ENCODE measurements at regions of chr2 and their contacts with region 1.

Region 1: DNA sequence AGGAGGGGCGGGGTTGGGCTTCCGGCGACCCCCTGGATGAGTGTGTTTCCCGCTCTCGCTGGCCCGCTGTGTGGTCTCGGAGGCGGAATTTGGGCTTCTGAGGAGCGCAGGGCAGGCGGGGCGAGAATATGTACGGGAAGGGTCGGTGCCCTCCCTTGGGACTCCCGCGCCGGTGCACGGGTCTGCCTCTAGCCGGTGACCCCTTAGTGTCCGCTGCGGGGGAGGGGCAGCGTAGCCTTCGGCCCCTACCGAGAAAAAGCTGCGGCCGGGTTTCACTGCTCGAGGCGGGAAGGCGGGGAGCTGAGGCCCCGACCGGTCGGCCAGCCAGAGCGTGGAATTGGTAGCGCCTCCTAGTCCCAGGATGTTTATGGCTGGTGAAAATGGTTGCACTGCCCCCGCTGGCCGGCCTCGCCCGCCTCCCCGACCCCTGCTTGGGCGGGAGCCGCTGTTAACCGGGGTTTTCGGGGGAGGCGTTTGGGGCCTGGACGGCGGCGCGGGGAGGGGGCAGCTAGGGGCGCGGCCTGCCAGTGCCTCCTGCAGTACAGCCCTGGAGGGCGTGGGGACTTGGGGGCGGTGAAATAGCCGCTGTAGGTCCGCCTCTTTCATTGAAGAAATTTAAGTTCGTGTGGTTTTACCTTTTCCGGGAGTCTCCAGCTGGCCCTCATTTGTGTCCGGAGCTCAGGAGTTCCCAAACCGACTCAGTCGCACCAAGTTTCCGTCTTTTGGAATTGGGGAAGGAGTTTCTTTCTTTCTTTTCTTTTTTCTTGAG is at the start of gene UGP2:
- DNase-seq: peak; percentile 91
- ATAC-seq: peak; percentile 72
- H3K4me3 Mint-ChIP-seq: peak within 1 kb of the TSS; percentile 92
- H3K27ac Mint-ChIP-seq: peak within 1 kb of the TSS; percentile 98
- H3K4me1 Mint-ChIP-seq: peaks cover 39% of the 10 kb centered on the region
- H3K27me3 Mint-ChIP-seq: no peaks in the 10 kb centered on the region
- total RNA-seq, gene UGP2: 98.4 to 144 TPM

Region 2: DNA sequence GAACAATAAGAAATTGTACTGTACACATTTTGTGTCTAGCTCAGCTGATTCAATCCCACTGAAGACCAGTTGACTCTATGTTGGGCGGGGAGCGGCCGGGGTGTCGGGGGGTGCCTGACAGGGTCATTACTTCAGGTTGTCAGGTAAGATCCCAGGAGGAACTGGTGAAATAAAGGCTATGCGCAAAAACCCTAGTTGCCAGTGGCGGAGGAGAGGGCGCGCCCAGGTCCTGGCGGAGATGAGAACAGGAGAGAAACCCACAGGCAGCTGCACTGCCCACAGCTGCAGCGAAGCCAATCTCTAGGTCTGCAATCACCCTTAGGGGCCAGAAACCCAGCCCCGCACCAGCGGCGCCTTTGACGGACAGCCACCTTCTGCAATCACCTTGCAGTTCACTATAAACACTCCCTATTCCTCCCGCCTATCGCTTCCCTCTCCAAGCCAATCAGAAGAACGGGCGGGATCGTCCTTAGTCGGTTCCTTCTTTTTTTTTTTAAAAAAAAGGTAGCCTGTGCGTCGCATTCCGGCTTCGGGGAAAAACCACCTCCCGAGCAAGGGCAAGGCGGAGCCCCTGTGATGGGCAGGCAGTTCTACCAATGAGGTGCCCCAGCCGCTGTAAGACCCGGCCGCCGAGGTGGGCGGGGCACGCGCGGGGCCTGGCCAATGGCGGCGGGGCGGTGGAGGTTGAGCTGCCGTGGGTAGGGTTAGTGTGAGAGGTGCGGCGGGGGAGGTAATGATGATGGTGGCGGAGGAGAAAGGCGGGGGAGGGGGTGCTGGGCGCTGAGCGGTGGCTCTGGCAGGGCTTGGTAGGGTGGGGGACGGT is 1136.2 kb before region 1 on chr2 and contains the start of gene EHBP1:
- CTCF ChIA-PET with region 1: no interaction called
- POLR2A ChIA-PET with region 1: interaction called, 4 read pairs
- intact Hi-C with region 1: loop called in 1 of 2 experiments (anchors 1 kb)
- DNase-seq: peak; percentile 99
- ATAC-seq: peak; percentile 95
- H3K4me3 Mint-ChIP-seq: peak within 1 kb of the TSS; percentile 79
- H3K27ac Mint-ChIP-seq: peak within 1 kb of the TSS; percentile 83
- H3K4me1 Mint-ChIP-seq: peaks cover 31% of the 10 kb centered on the region
- H3K27me3 Mint-ChIP-seq: no peaks in the 10 kb centered on the region
- total RNA-seq, gene EHBP1: 27.3 to 28.5 TPM

Region 3: GRCh38 chr2:63856303-63856603 is 14.8 kb after region 1 on chr2:
- CTCF ChIA-PET with region 1: interaction called, 33 read pairs
- POLR2A ChIA-PET with region 1: interaction called, 14 read pairs
- intact Hi-C with region 1: loop called (anchors 1 kb)
- DNase-seq: peak; percentile 63
- ATAC-seq: peak; percentile 89
- H3K4me3 Mint-ChIP-seq: peak overlapping the region; percentile 40
- H3K27ac Mint-ChIP-seq: peak overlapping the region; percentile 83
- H3K4me1 Mint-ChIP-seq: peaks cover 51% of the 10 kb centered on the region
- H3K27me3 Mint-ChIP-seq: no peaks in the 10 kb centered on the region

Region 4: GRCh38 chr2:64018923-64019718 is 177.7 kb after region 1 on chr2 and contains the start of gene VPS54:
- CTCF ChIA-PET with region 1: no interaction called
- POLR2A ChIA-PET with region 1: no interaction called
- intact Hi-C with region 1: loop called in 1 of 2 experiments (anchors 1 kb)
- DNase-seq: peak; percentile 74
- ATAC-seq: peak; percentile 80
- H3K4me3 Mint-ChIP-seq: peak within 1 kb of the TSS; percentile 99
- H3K27ac Mint-ChIP-seq: peak within 1 kb of the TSS; percentile 98
- H3K4me1 Mint-ChIP-seq: peaks cover 37% of the 10 kb centered on the region
- H3K27me3 Mint-ChIP-seq: no peaks in the 10 kb centered on the region
- total RNA-seq, gene VPS54: 9.0 to 11.7 TPM

Region 5: DNA sequence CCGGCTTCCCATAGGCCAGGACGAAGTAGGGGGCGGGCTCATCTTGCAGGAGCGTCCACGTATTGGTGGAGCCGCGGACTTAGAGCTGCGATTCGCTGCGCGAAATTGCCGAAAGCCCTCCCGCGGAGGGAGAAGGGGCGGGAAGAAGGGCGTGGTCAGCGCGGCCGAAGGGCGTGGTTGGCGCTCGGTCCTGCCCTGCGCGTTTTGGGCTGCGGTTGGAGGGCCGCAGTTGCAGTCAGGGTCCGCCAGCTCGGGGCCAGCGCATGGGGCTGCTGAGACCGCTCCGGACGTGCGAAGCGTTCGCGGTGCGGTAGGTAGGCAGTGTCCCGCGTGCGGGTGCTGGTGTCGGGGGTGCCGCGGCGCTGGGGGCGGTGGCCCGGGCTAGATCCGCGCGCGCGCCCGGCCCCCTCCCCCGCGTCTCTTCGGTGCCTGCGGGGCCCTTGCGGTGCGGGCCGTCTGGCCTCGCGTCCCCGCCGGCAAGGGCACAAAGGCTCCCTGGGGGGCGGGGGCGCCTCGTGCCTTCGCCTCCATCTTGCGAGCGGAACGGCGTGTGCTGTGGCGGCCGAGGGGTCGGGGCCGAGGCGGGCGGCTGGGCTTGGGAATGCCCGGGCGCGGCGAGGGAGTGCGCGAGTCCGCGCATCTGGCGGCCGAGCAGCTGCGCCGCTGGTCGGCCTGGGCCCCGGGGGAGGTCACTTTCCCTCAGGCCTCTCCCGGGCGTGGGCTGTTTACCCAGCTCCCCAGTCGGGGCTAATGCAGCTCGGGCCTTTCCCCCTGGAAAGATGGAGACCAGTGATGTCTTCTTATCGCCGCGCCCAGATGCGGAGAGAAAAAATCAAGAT is 1215.0 kb after region 1 on chr2 and contains the start of gene CEP68:
- CTCF ChIA-PET with region 1: interaction called, 3 read pairs
- POLR2A ChIA-PET with region 1: no interaction called
- intact Hi-C with region 1: loop called in 1 of 2 experiments (anchors 2 kb)
- DNase-seq: peak; percentile 98
- ATAC-seq: peak; percentile 94
- H3K4me3 Mint-ChIP-seq: peak within 1 kb of the TSS; percentile 93
- H3K27ac Mint-ChIP-seq: peak within 1 kb of the TSS; percentile 84
- H3K4me1 Mint-ChIP-seq: peaks cover 55% of the 10 kb centered on the region
- H3K27me3 Mint-ChIP-seq: no peaks in the 10 kb centered on the region
- total RNA-seq, gene CEP68: 4.9 to 6.0 TPM

Region 6: GRCh38 chr2:65227425-65228262 is 1386.2 kb after region 1 on chr2 and contains the start of gene ACTR2:
- CTCF ChIA-PET with region 1: no interaction called
- POLR2A ChIA-PET with region 1: no interaction called
- intact Hi-C with region 1: loop called in 1 of 2 experiments (anchors 5 kb)
- DNase-seq: peak; percentile 97
- ATAC-seq: peak; percentile 96
- H3K4me3 Mint-ChIP-seq: peak within 1 kb of the TSS; percentile 95
- H3K27ac Mint-ChIP-seq: peak within 1 kb of the TSS; percentile 98
- H3K4me1 Mint-ChIP-seq: peaks cover 30% of the 10 kb centered on the region
- H3K27me3 Mint-ChIP-seq: no peaks in the 10 kb centered on the region
- total RNA-seq, gene ACTR2: 326 to 388 TPM